ENCODE measurements at regions of chr3 and their contacts with region 1.

Region 1: GRCh38 chr3:29764603-29765254 is 483.9 kb downstream of the RBMS3 start:
- DNase-seq: peak in 1 of 2 donors; percentile 74
- ATAC-seq: peak in 7 of 8 donors; percentile 61 to 77 (median 73)
- H3K4me3 ChIP-seq: no peak overlapping the region
- H3K27ac ChIP-seq: peak overlapping the region in 1 of 10 donors; percentile 13
- H3K4me1 ChIP-seq: peaks cover 1 to 40% (median 32%) of the 10 kb centered on the region in 9 donors
- H3K27me3 ChIP-seq: no peaks in the 10 kb centered on the region
- CTCF ChIP-seq: peak; percentile 63 to 88 (median 67)

Region 2: GRCh38 chr3:28916713-28917499 is 847.8 kb before region 1 on chr3:
- intact Hi-C with region 1: loop called in 7 of 10 experiments (anchors 2 to 5 kb)
- DNase-seq: peak; percentile 33 to 84
- ATAC-seq: peak; percentile 93 to 97 (median 96)
- H3K4me3 ChIP-seq: peak overlapping the region in 7 of 10 donors; percentile 29 to 48 (median 39)
- H3K27ac ChIP-seq: peak overlapping the region in 9 of 10 donors; percentile 13 to 70 (median 63)
- H3K4me1 ChIP-seq: peaks cover 0 to 27% (median 10%) of the 10 kb centered on the region in 9 donors
- H3K27me3 ChIP-seq: no peaks in the 10 kb centered on the region
- CTCF ChIP-seq: peak; percentile 46 to 83 (median 70)

Region 3: GRCh38 chr3:29171043-29171990 is 593.4 kb before region 1 on chr3:
- intact Hi-C with region 1: loop called in 1 of 10 experiments (anchors 10 kb)
- DNase-seq: no peak
- ATAC-seq: peak in 7 of 8 donors; percentile 41 to 90 (median 62)
- H3K4me3 ChIP-seq: no peak overlapping the region
- H3K27ac ChIP-seq: peak overlapping the region; percentile 7 to 85 (median 70)
- H3K4me1 ChIP-seq: peaks cover 0 to 37% (median 24%) of the 10 kb centered on the region in 9 donors
- H3K27me3 ChIP-seq: no peaks in the 10 kb centered on the region
- CTCF ChIP-seq: no peak

Region 4: DNA sequence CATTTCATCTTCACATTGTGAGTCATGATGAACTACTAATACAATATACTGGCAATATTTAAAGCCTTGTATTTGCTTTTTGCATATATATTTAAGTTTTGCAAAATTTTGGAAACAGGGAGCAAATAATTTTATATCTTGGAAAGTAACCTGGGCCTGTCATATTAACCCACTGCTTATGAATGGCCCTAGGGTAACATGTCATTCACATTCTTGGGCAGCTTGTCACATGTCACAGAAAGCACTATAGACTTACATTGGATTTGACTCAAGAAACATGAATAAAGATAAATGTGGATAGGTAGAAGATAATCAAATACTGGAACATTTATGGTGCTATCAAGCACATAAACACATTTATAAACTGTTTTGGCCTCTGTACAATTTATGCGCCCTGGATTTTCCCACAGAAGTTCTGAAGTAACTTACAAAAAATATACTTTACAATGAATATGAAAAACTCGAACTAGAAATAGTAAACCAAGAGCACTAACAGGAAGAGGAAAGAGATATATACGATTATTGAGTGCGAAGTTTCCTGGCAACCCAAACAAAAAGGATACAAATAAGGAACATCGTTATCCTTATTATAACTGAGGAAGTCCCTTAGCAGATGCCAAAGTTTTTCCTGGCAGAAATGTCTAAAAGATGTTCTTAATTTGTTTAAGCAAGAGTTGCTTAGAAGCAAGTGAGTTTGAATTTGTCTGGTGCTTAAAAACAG is 226.7 kb before region 1 on chr3:
- intact Hi-C with region 1: loop called in 3 of 10 experiments (anchors 10 kb)
- DNase-seq: no peak
- ATAC-seq: peak in 4 of 8 donors; percentile 16 to 47 (median 31)
- H3K4me3 ChIP-seq: no peak overlapping the region
- H3K27ac ChIP-seq: peak overlapping the region in 6 of 10 donors; percentile 2 to 35 (median 16)
- H3K4me1 ChIP-seq: peaks cover 5 to 57% (median 23%) of the 10 kb centered on the region in 9 donors
- H3K27me3 ChIP-seq: no peaks in the 10 kb centered on the region
- CTCF ChIP-seq: no peak

Region 5: GRCh38 chr3:29871087-29871486 is 106.4 kb after region 1 on chr3:
- intact Hi-C with region 1: no loop called
- DNase-seq: no peak
- ATAC-seq: no peak
- H3K4me3 ChIP-seq: no peak overlapping the region
- H3K27ac ChIP-seq: no peak overlapping the region
- H3K4me1 ChIP-seq: no peaks in the 10 kb centered on the region
- H3K27me3 ChIP-seq: no peaks in the 10 kb centered on the region
- CTCF ChIP-seq: no peak